ENCODE measurements at regions of chr5 and their contacts with region 1.

Region 1: DNA sequence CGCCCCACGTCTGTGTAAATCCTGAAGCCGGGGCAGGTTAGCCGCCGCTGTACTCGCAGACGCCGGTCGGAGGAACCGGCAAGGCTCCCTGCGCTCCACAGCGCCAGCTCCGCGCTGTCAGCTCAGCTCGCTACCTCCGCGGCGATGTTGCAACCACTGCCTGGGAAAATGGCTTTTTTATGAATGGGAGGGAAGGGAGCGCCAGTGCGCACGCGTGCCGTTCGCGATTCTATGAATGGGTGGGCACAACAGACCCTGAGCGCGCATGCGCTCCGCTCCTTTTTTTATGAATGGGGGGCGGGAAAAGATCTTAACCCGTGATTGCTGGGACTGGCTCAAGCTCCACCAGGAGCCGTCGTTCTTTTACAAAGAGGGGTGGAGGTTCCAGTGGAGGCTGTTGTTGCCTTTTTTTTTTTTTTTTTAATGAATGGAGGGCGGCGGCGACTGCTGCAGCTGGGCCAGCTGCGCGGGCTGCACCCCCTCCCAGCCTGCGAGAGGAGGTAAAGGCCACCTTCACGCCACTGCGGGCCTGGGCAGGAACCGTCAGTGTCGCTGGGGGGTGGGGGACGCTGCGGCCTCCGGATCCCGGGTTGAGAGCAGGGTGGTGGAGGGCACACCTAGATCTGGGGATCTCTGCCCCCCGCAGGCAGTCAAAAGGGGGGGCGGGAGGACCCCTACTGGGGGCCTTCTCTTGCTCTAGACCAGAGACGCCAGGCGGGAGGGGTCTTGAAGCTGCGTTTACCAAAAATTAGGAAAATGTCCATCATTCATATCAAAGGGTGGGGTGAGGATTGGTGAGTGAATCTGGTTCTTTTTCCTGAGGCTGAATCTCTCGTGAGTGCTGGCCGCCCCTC is at the start of gene SPRY4:
- DNase-seq: peak; percentile 97
- H3K4me3 ChIP-seq: peak within 1 kb of the TSS; percentile 62 to 87 (median 70)
- H3K27ac ChIP-seq: peak within 1 kb of the TSS; percentile 85 to 96 (median 88)
- H3K4me1 ChIP-seq: peaks cover 17 to 61% (median 56%) of the 10 kb centered on the region in 4 donors
- H3K27me3 ChIP-seq: peaks cover 0 to 9% (median 3%) of the 10 kb centered on the region in 4 donors
- CTCF ChIP-seq: peak in 2 of 3 experiments; percentile 17 to 22
- EP300 ChIP-seq: no peak
- POLR2A ChIP-seq: peak; percentile 62
- total RNA-seq, gene SPRY4: 15.4 to 29.0 (median 24.5) TPM

Region 2: GRCh38 chr5:142151436-142152383 is 173.4 kb before region 1 on chr5:
- intact Hi-C with region 1: loop called (anchors 10 kb)
- DNase-seq: no peak
- H3K4me3 ChIP-seq: no peak overlapping the region
- H3K27ac ChIP-seq: no peak overlapping the region
- H3K4me1 ChIP-seq: peaks cover 0 to 7% (median 3%) of the 10 kb centered on the region in 4 donors
- H3K27me3 ChIP-seq: no peaks in the 10 kb centered on the region
- CTCF ChIP-seq: peak; percentile 86 to 92 (median 89)
- EP300 ChIP-seq: no peak
- POLR2A ChIP-seq: no peak

Region 3: GRCh38 chr5:142356716-142357473 is 31.8 kb after region 1 on chr5:
- intact Hi-C with region 1: loop called (anchors 2 kb)
- DNase-seq: peak; percentile 98
- H3K4me3 ChIP-seq: peak overlapping the region; percentile 67 to 83 (median 78)
- H3K27ac ChIP-seq: peak overlapping the region; percentile 88 to 99 (median 96)
- H3K4me1 ChIP-seq: peaks cover 15 to 24% (median 19%) of the 10 kb centered on the region in 4 donors
- H3K27me3 ChIP-seq: no peaks in the 10 kb centered on the region
- CTCF ChIP-seq: no peak
- EP300 ChIP-seq: no peak
- POLR2A ChIP-seq: no peak

Region 4: GRCh38 chr5:142486581-142486980 is 161.5 kb after region 1 on chr5:
- intact Hi-C with region 1: no loop called
- DNase-seq: no peak
- H3K4me3 ChIP-seq: no peak overlapping the region
- H3K27ac ChIP-seq: no peak overlapping the region
- H3K4me1 ChIP-seq: peaks cover 0 to 15% (median 9%) of the 10 kb centered on the region in 4 donors
- H3K27me3 ChIP-seq: no peaks in the 10 kb centered on the region
- CTCF ChIP-seq: no peak
- EP300 ChIP-seq: no peak
- POLR2A ChIP-seq: no peak